Posterior cingulate gyrus (tissue), 11 donors: ENCODE measurements at regions of chr1 and their contacts with region 1.

Region 1: GRCh38 chr1:54810100-54810942 is 9.2 kb upstream of the TTC22 start:
- DNase-seq: peak; percentile 40 to 95 (median 72)

Region 2: DNA sequence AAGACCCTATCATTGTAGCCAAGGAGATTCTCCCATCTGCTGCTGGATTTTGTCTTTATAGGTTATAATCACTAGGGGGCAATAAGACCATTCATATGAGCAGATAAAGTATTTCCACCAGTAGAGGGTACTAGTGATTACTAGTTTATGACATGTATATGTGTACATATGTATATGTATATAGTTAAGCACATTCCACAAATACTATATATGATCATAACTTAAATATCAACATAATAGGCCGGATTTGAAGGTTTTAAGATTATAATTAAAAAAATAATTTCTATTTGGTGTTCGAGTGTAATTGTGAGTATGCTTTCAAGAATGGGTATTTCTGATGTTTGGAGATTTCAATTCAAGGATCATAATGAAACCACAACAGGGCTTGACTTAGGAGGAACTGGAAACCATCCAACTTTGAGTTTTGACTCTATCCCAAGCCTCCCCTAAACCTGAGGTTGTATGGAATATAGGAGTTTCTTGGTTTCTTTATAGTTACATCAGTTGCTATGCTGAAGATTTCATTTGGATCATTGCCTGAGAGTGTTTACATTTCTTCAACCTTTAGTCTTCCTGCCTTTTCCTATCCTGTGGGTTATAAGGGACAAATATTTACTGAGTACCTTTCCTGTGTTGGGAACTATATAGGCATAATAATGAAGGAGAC is 740.0 kb before region 1 on chr1:
- intact Hi-C with region 1: loop called (anchors 10 kb)
- DNase-seq: no peak

Region 3: GRCh38 chr1:54671985-54672608 is 138.2 kb before region 1 on chr1:
- intact Hi-C with region 1: loop called (anchors 2 kb)
- DNase-seq: peak in 5 of 10 donors; percentile 20 to 74 (median 25)

Region 4: DNA sequence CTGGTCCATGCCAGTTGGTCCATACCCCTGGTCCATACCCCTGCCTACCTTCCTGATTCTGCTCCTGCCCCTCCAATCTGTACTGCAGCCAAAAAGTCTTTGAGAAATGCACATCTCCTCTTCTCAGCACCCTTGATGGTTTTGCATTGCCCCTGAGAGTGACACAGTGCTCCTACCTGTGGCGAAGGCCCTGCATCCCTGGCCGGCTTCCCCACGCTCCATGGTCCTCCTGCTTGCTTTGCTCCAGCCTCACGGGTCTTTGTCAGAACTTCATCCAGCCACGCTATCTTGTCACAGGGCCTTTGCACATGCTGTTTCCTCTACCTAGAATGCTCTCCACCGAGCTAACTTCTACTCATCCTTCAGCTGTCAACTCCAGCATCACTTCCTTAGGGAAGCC is 126.9 kb before region 1 on chr1:
- intact Hi-C with region 1: no loop called
- DNase-seq: peak in 1 of 10 donors; percentile 74